Sciatic nerve (tissue), 2 donors: ENCODE measurements at regions of chr6 and their contacts with region 1.

Region 1: DNA sequence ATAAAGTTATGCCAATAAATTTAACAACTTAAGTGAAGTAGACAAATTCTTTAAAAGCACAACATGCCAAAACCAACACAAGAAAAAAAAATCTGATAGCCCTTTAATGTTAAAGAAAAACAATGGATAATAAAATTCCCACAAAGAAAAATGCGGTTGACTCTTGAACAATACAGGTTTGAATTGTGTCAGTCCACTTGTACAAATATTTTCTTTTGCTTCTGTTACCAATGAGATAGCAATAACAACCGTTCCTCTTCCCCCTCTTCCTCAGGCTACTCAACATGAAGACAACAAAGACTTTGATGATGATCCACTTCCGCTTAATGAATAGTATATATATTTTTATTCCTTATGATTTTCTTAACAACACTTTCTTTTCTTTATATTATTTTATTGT is 283.9 kb upstream of the MAN1A1 start:
- DNase-seq: no peak
- ATAC-seq: no peak

Region 2: DNA sequence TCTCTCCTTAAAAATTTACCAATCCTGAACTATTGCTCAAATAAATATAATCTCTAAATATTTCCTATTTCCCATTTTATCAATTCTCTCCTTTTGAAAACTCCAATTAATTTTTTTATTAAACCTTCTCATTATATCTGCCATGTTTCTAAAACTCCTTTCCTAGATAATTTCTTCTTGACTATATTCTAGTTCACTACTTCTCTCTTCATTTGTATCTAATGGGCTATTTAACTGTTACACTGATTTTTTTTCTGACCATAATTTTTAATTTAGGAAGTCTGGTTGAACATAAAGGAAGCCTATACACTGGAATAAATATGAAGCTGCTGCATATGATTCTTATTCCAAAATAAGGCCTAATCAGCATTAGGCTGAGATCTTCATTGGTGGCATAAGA is 1181.6 kb before region 1 on chr6:
- intact Hi-C with region 1: loop called (anchors 5 kb)
- DNase-seq: no peak
- ATAC-seq: no peak